CD8-positive, alpha-beta memory T cell (primary cell): ENCODE measurements at regions of chr3 and their contacts with region 1.

Region 1: GRCh38 chr3:187738331-187739093 is 6.8 kb downstream of the BCL6 start:
- DNase-seq: peak; percentile 46 to 77 (median 65)
- H3K4me3 ChIP-seq: peak overlapping the region; percentile 81
- H3K4me3 Mint-ChIP-seq: peak overlapping the region; percentile 91 to 99 (median 98)
- H3K27ac ChIP-seq: peak overlapping the region; percentile 68
- H3K27ac Mint-ChIP-seq: peak overlapping the region; percentile 82 to 100 (median 99)
- H3K4me1 ChIP-seq: peaks cover 30% of the 10 kb centered on the region
- H3K4me1 Mint-ChIP-seq: peaks cover 43 to 59% (median 56%) of the 10 kb centered on the region in 3 donors
- H3K27me3 ChIP-seq: no peaks in the 10 kb centered on the region
- H3K27me3 Mint-ChIP-seq: peaks cover 0 to 9% of the 10 kb centered on the region in 2 donors

Region 2: DNA sequence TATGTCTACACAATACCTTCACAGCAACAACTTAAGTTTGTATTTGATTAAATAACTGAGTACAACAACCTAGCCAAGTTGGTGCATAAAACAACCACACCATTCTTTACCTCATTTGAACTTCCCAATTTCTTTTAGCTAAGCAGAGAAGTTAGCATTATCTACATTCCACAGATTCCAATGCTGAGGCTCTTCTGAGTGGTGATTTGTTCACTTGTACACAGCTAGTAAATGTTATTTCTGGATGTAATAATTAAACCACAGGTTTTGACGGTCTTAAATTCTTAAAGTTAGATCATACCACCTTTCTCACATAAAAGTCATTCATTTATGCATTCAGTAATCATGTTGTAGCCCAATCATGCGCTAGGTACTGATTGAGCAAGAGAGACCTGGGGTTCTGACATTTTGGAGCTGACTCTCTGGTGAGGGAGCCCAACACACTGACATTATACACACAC is 170.8 kb before region 1 on chr3:
- CTCF ChIA-PET with region 1: no interaction called
- POLR2A ChIA-PET with region 1: no interaction called
- DNase-seq: no peak
- H3K4me3 ChIP-seq: no peak overlapping the region
- H3K4me3 Mint-ChIP-seq: no peak overlapping the region
- H3K27ac ChIP-seq: no peak overlapping the region
- H3K27ac Mint-ChIP-seq: no peak overlapping the region
- H3K4me1 ChIP-seq: no peaks in the 10 kb centered on the region
- H3K4me1 Mint-ChIP-seq: no peaks in the 10 kb centered on the region
- H3K27me3 ChIP-seq: no peaks in the 10 kb centered on the region
- H3K27me3 Mint-ChIP-seq: peaks cover 9 to 41% of the 10 kb centered on the region in 2 donors

Region 3: DNA sequence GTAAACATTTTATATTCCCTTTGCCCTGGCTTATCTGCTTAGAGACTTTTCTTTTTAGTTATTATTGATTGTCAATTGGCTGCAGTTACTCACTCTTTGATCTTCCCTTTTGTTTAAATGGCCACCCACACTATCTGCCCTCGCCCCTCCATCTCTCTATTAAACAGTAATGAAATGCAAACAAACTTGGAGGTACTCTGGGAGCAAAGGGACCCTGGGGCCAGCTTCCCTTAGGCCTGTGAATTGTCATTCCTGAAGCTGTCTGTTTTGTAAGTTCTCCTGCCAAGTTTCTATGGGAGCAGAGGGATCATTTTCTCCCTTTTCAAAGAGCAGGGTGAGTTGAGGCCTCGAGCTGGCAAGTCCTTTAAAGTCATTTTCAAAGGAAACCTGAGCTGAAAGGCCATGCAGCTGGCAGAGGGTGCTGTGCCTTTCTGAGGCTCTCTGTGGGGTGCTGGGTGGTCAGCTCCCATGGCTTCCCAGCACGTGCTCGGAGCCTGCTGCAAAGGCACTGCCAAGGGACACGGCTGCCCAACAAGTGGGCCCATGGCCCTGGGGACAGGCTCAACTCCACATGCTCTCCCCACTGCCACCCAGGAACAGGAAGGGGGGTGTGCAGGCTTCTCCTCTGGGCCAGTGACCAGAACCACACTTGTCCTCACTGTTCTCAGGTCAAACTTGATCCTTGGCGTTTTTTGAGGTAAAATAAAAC is 18.7 kb before region 1 on chr3:
- CTCF ChIA-PET with region 1: interaction called, 16 read pairs
- POLR2A ChIA-PET with region 1: no interaction called
- DNase-seq: no peak
- H3K4me3 ChIP-seq: no peak overlapping the region
- H3K4me3 Mint-ChIP-seq: no peak overlapping the region
- H3K27ac ChIP-seq: no peak overlapping the region
- H3K27ac Mint-ChIP-seq: no peak overlapping the region
- H3K4me1 ChIP-seq: no peaks in the 10 kb centered on the region
- H3K4me1 Mint-ChIP-seq: no peaks in the 10 kb centered on the region
- H3K27me3 ChIP-seq: no peaks in the 10 kb centered on the region
- H3K27me3 Mint-ChIP-seq: no peaks in the 10 kb centered on the region

Region 4: DNA sequence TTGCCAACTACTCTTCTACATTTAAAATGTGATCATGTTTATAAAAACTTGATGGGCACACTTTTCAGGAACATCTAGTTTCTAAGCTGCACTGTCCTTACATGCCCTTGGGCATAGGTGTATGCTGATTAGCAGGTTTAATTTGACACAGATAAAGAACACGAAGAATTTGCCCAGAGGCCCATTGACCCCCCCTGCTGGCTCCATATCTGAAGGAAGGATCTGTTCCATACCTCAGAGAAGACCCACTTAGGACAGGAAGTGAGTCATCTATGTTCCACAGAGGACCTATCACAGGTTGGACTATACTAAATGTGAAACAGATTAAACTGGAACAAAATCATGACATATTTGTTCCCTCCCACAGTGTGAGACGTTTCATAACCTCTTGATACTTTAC is 322.6 kb after region 1 on chr3:
- CTCF ChIA-PET with region 1: interaction called, 22 read pairs
- POLR2A ChIA-PET with region 1: no interaction called
- DNase-seq: peak in 4 of 5 donors; percentile 17 to 63 (median 62)
- H3K4me3 ChIP-seq: no peak overlapping the region
- H3K4me3 Mint-ChIP-seq: peak overlapping the region in 1 of 7 donors; percentile 14
- H3K27ac ChIP-seq: no peak overlapping the region
- H3K27ac Mint-ChIP-seq: peak overlapping the region; percentile 52 to 95 (median 83)
- H3K4me1 ChIP-seq: peaks cover 4% of the 10 kb centered on the region
- H3K4me1 Mint-ChIP-seq: peaks cover 15 to 22% (median 18%) of the 10 kb centered on the region in 3 donors
- H3K27me3 ChIP-seq: no peaks in the 10 kb centered on the region
- H3K27me3 Mint-ChIP-seq: no peaks in the 10 kb centered on the region

Region 5: DNA sequence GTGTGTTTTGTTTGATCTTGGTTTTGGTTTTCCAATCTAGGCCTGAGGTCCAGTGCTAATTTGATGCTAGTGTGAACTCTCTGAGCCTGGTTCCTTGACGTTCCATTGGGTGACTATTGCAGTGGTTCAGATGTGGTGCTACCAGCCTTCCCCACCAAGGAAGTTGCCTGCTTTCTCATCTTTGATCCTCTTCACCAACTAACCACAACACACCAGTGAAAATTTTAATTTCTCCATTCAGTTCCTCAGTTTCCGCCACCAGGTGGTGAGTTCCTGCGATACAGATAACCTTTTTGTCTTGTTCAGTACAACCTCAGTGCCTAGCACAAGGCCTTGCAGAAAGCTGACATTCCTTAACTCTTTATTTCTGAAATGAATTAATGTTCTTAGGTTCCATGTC is 1095.8 kb after region 1 on chr3:
- CTCF ChIA-PET with region 1: interaction called, 10 read pairs
- POLR2A ChIA-PET with region 1: interaction called, 3 read pairs
- DNase-seq: peak in 2 of 5 donors; percentile 1 to 7
- H3K4me3 ChIP-seq: no peak overlapping the region
- H3K4me3 Mint-ChIP-seq: no peak overlapping the region
- H3K27ac ChIP-seq: no peak overlapping the region
- H3K27ac Mint-ChIP-seq: no peak overlapping the region
- H3K4me1 ChIP-seq: peaks cover 9% of the 10 kb centered on the region
- H3K4me1 Mint-ChIP-seq: peaks cover 14 to 17% (median 17%) of the 10 kb centered on the region in 3 donors
- H3K27me3 ChIP-seq: no peaks in the 10 kb centered on the region
- H3K27me3 Mint-ChIP-seq: peaks cover 0 to 2% of the 10 kb centered on the region in 2 donors

Region 6: GRCh38 chr3:188974856-188975599 is 1236.5 kb after region 1 on chr3:
- CTCF ChIA-PET with region 1: interaction called, 18 read pairs
- POLR2A ChIA-PET with region 1: no interaction called
- DNase-seq: peak in 4 of 5 donors; percentile 1 to 77 (median 38)
- H3K4me3 ChIP-seq: no peak overlapping the region
- H3K4me3 Mint-ChIP-seq: peak overlapping the region; percentile 1 to 86 (median 67)
- H3K27ac ChIP-seq: peak overlapping the region; percentile 51
- H3K27ac Mint-ChIP-seq: peak overlapping the region; percentile 30 to 96 (median 90)
- H3K4me1 ChIP-seq: peaks cover 8% of the 10 kb centered on the region
- H3K4me1 Mint-ChIP-seq: peaks cover 22 to 45% (median 43%) of the 10 kb centered on the region in 3 donors
- H3K27me3 ChIP-seq: no peaks in the 10 kb centered on the region
- H3K27me3 Mint-ChIP-seq: peaks cover 0 to 2% of the 10 kb centered on the region in 2 donors

Region 7: GRCh38 chr3:189132231-189132707 is 1393.8 kb after region 1 on chr3:
- CTCF ChIA-PET with region 1: interaction called, 54 read pairs
- POLR2A ChIA-PET with region 1: interaction called, 10 read pairs
- DNase-seq: peak; percentile 61 to 91 (median 70)
- H3K4me3 ChIP-seq: peak overlapping the region; percentile 23
- H3K4me3 Mint-ChIP-seq: peak overlapping the region; percentile 5 to 81 (median 65)
- H3K27ac ChIP-seq: peak overlapping the region; percentile 82
- H3K27ac Mint-ChIP-seq: peak overlapping the region; percentile 94 to 99 (median 97)
- H3K4me1 ChIP-seq: peaks cover 25% of the 10 kb centered on the region
- H3K4me1 Mint-ChIP-seq: peaks cover 46 to 85% (median 67%) of the 10 kb centered on the region in 3 donors
- H3K27me3 ChIP-seq: no peaks in the 10 kb centered on the region
- H3K27me3 Mint-ChIP-seq: no peaks in the 10 kb centered on the region